Right cardiac atrium (tissue), 5 donors: ENCODE measurements at regions of chr7 and their contacts with region 1.

Region 1: DNA sequence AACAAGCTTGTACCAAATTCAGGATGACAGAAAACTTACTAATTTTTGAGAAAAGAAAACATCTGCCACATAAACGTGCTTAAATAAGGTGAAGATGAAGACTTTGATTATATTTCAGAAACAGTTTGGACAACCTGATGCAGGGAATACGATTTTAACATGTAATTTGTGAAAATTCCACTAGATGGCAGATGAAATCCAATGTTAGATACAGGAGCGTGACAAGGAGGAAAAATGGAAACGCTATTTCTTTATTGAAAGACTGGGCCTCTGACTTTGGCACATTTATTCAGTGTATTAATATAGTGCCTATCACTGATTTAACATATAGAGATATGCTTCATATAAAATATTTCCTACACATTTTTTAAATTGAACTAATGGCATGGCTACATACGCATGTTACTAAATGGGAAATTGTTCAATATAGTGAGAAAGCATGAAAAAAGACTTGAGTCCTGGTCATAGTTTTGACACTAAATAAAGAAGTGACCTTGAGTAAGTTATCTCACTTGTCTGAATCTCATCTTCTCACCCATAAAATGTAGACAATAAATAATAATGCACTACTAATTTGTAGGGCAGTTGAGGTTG is 60.7 kb downstream of the CD36 start:
- DNase-seq: no peak
- ATAC-seq: peak; percentile 60 to 66
- H3K4me3 ChIP-seq: no peak overlapping the region
- H3K27ac ChIP-seq: no peak overlapping the region
- H3K4me1 ChIP-seq: no peaks in the 10 kb centered on the region
- H3K27me3 ChIP-seq: no peaks in the 10 kb centered on the region

Region 2: DNA sequence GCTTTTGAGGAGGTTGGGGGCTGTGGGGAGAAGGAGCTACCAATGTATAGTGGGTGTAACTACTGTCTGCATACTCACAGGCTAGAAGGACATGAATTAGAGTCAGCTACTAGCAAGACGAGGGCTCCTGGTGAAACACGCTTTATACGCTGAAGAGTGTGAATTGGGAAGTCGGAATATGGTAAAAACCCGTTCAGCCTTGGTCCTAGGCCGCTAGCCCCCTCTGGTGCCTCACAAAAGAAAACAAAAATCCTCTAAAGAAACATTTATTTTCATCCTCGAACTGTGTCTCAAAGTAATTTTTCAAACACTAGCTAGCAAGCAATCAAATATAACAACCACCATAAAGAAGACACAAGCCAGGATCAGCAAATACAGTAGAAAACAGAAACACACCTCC is 557.8 kb after region 1 on chr7:
- intact Hi-C with region 1: loop called (anchors 5 to 10 kb)
- DNase-seq: peak in 2 of 3 donors; percentile 37 to 64
- ATAC-seq: peak; percentile 53 to 75
- H3K4me3 ChIP-seq: no peak overlapping the region
- H3K27ac ChIP-seq: no peak overlapping the region
- H3K4me1 ChIP-seq: no peaks in the 10 kb centered on the region
- H3K27me3 ChIP-seq: no peaks in the 10 kb centered on the region

Region 3: DNA sequence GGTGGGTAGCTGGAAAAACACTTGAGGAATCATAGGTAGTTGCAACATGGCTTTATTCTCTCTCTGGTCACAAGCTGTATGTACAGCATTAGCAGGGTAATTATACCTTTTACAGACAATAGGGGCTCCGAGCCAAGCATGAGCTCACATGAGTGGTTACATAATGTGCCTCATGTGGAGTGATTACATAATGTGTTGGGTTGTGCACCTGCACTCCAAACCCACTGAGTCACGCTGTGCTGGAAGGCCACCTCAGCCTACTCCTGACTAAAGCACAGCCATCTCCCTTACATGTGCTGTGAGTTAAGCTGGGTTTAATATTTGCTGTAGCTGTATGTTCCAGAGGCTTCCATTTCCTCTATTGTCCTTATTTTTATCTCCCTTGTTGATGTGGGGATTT is 568.4 kb after region 1 on chr7:
- intact Hi-C with region 1: loop called in 1 of 4 experiments (anchors 10 kb)
- DNase-seq: no peak
- ATAC-seq: no peak
- H3K4me3 ChIP-seq: no peak overlapping the region
- H3K27ac ChIP-seq: no peak overlapping the region
- H3K4me1 ChIP-seq: no peaks in the 10 kb centered on the region
- H3K27me3 ChIP-seq: no peaks in the 10 kb centered on the region

Region 4: DNA sequence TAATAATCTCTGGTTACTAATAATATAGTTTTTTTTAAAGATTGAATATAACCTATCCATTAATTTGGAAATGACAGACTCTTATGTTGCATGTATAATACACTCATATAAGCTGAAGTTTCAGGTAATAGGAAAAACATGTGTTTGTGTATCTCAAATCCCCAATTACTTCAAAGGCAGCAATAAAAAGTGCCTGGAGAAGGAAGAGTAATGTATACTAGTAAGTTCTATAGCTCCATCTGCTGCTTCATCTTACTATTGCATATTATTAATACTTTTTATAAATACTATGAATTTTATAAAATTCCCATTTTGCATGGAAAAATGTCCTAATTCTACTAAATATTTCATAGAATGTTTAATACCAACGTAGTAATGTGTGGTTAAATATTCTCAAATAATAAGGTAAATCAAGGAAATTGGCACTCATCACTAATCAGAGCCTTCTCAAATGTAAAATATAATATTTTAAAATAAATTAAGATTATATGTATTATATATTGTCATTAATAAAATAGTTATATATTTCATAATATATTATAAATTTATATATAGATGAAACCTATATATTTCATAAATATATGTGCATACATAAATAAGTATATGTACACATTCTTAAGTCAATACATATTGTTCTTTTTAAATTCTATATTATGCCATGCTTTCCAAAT is 758.8 kb after region 1 on chr7:
- intact Hi-C with region 1: loop called in 2 of 4 experiments (anchors 5 to 10 kb)
- DNase-seq: no peak
- ATAC-seq: no peak
- H3K4me3 ChIP-seq: no peak overlapping the region
- H3K27ac ChIP-seq: no peak overlapping the region
- H3K4me1 ChIP-seq: no peaks in the 10 kb centered on the region
- H3K27me3 ChIP-seq: no peaks in the 10 kb centered on the region

Region 5: DNA sequence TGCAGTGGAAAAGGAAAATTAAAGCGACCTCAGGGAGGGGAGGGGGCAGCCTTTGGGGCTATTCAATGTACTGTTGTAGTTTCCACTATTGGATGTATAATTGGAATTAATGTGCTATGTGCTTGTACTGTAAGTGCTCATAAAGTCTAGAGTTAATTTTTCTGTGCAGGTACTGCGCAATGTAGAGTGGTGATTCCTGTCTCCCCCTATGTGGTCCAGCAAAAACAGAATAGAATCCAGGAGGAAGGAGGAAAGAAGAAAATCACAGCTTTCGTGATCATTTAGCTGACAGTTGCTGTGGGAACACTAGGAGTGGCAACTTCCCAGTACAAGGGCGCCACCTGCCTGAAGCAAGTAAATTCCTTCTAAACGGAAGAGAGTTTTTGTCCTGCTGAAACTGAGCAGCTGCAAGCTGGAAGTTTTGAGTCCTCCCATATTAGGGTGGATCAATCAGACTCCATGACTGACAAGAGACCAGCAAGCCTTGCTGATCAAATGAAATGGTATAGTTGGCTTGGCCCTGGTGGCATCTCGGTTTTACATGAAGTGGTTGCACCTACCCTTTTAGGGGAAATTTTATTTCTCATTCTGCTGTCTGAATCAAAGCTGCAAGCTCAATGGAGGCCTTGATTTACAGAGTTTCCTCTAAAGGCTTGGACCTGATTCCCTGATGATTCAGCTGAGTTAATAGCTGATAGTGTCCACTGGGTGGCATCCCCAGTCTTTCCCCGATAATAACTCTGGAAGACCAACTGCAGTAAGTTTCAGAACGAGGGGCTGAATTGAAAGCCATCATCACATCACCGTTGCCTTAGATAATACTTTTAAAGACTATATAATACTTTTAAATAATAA is 771.0 kb after region 1 on chr7:
- intact Hi-C with region 1: loop called in 3 of 4 experiments (anchors 5 to 10 kb)
- DNase-seq: peak; percentile 73 to 83 (median 74)
- ATAC-seq: peak; percentile 84 to 87
- H3K4me3 ChIP-seq: no peak overlapping the region
- H3K27ac ChIP-seq: no peak overlapping the region
- H3K4me1 ChIP-seq: no peaks in the 10 kb centered on the region
- H3K27me3 ChIP-seq: no peaks in the 10 kb centered on the region